Posterior vena cava (tissue), 2 donors: ENCODE measurements at regions of chr15 and their contacts with region 1.

Region 1: GRCh38 chr15:91116113-91117067 is 16.3 kb downstream of the SV2B start:
- DNase-seq: no peak

Region 2: DNA sequence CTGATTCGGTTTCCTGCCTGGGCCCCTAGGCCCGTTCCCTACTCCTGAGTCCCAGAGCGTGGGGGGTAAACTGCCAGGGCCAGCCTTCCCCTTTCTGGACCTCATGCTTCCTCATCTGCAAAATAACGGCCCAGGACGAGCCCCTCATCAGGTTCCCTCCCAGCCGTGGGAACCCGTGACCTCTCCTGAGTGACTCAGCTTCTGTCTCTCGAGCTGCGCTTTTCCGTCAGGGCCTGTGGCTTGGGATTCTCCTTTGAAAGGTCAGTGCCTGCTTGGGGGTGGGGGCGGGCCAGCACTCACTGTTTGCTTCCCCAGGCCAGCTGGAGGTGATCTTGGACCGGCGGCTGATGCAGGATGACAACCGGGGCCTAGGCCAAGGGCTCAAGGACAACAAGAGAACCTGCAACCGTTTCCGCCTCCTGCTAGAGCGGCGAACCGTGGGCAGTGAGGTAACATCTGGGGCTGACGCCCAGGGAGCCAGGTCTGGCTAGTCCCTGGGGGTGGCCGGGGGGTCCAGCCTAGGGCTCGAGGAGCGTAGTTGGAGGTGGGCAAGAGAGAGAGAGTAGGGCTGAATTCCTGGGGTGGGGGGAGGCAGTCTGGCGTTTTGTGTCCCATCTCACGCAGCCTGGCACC is 200.5 kb before region 1 on chr15:
- intact Hi-C with region 1: no loop called
- DNase-seq: peak; percentile 91

Region 3: DNA sequence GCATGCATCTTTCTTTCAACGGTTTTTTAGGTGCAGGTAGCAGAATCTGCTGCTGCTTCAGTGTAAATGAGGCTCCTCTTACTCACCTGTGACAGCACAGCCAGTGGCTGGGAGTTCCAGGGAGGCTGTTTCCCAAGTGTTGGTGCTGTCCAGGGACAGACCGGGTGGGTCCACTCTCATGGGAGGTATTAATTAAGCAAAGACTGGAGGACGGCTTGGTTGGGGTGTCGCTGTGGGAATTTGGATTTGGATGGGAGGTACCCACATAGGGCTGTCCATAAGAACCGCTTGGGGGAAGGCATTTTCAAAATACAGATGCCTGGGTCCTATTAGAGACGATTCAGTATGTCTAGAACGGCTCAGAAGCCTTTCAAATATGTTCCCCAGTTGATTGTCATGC is 26.6 kb after region 1 on chr15:
- intact Hi-C with region 1: loop called in 1 of 2 experiments (anchors 1 kb)
- DNase-seq: no peak